Calu3 (cell line): ENCODE measurements at regions of chr14 and their contacts with region 1.

Region 1: DNA sequence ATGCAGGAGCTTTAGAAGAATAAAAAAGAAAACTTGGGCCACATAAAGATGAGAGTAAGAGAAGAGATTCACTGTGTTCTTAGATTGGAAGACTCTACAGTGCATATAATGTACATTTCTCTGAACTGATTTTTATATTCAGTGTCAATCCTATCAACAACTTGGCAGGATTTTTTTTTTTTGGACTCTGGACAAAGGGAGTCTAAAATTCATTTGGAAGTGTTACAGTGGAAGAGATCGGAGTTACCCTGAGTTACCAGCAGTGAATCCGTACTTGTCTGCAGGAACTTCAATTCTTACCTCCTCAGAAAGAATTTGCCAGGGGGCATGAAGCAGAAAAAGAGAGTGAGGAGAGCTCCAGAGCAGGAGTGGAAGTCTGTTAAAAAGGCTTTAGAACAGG is 24.0 kb downstream of the SERPINA11 start:
- DNase-seq: no peak
- H3K4me3 Mint-ChIP-seq: no peak overlapping the region
- H3K27ac Mint-ChIP-seq: no peak overlapping the region
- H3K4me1 Mint-ChIP-seq: peaks cover 1% of the 10 kb centered on the region
- H3K27me3 Mint-ChIP-seq: peaks cover 24% of the 10 kb centered on the region
- CTCF ChIP-seq: no peak

Region 2: GRCh38 chr14:94548999-94549985 is 120.7 kb after region 1 on chr14:
- CTCF ChIA-PET with region 1: interaction called, 11 read pairs
- intact Hi-C with region 1: no loop called
- DNase-seq: peak; percentile 77
- H3K4me3 Mint-ChIP-seq: no peak overlapping the region
- H3K27ac Mint-ChIP-seq: no peak overlapping the region
- H3K4me1 Mint-ChIP-seq: no peaks in the 10 kb centered on the region
- H3K27me3 Mint-ChIP-seq: no peaks in the 10 kb centered on the region
- CTCF ChIP-seq: peak; percentile 88